ENCODE measurements at regions of chr15 and their contacts with region 1.

Region 1: GRCh38 chr15:89740137-89740536 is 10.9 kb downstream of the MESP1 start:
- DNase-seq: peak; percentile 68
- ATAC-seq: peak; percentile 99
- H3K4me3 Mint-ChIP-seq: no peak overlapping the region
- H3K27ac Mint-ChIP-seq: no peak overlapping the region
- H3K4me1 Mint-ChIP-seq: no peaks in the 10 kb centered on the region
- H3K27me3 Mint-ChIP-seq: peaks cover 5% of the 10 kb centered on the region

Region 2: DNA sequence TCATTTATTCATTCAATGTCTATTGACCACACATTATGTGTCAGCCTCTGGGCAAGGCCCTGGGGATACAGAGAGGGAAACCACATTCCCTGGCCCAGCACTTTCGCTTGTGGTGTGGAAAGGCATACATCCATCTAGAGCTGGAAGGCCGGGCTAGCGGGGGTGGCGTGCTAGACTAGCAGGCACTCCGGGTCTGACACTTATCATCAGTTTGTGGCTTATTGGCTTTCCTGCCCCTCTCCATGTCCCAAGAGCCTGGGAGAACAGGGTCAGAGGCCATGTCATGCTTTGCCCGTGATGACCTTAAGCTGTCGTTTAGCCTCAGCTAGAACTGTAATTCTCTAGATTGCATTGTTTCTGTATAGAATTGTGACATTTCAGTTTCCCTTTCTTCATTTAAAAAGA is 354.2 kb before region 1 on chr15:
- CTCF ChIA-PET with region 1: no interaction called
- POLR2A ChIA-PET with region 1: no interaction called
- intact Hi-C with region 1: no loop called
- DNase-seq: no peak
- ATAC-seq: no peak
- H3K4me3 Mint-ChIP-seq: no peak overlapping the region
- H3K27ac Mint-ChIP-seq: no peak overlapping the region
- H3K4me1 Mint-ChIP-seq: no peaks in the 10 kb centered on the region
- H3K27me3 Mint-ChIP-seq: peaks cover 25% of the 10 kb centered on the region

Region 3: DNA sequence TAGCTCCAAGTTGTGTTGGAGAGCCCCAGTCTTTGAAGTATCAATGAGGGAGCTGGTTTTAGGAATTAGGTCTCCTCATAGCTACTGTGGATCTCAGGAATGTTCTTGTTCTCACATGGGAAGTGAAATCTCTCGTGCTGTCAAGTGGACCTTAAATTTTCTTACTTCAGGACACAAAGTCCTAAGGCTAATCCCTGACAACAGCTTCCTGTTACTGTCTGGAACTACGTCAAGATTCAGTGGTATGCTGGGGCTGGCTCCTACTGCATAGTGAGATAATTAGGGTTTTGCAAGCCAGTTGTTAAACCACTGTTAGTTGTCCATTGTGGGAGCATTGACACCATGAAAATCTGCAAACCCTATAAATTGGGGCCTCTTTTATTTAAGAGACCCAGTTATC is 11.9 kb before region 1 on chr15:
- CTCF ChIA-PET with region 1: interaction called, 10 read pairs
- POLR2A ChIA-PET with region 1: no interaction called
- intact Hi-C with region 1: no loop called
- DNase-seq: no peak
- ATAC-seq: no peak
- H3K4me3 Mint-ChIP-seq: no peak overlapping the region
- H3K27ac Mint-ChIP-seq: no peak overlapping the region
- H3K4me1 Mint-ChIP-seq: no peaks in the 10 kb centered on the region
- H3K27me3 Mint-ChIP-seq: peaks cover 2% of the 10 kb centered on the region

Region 4: GRCh38 chr15:89760303-89761008 is 20.3 kb after region 1 on chr15:
- CTCF ChIA-PET with region 1: interaction called, 41 read pairs
- POLR2A ChIA-PET with region 1: no interaction called
- intact Hi-C with region 1: no loop called
- DNase-seq: peak; percentile 85
- ATAC-seq: peak; percentile 88
- H3K4me3 Mint-ChIP-seq: no peak overlapping the region
- H3K27ac Mint-ChIP-seq: no peak overlapping the region
- H3K4me1 Mint-ChIP-seq: no peaks in the 10 kb centered on the region
- H3K27me3 Mint-ChIP-seq: peaks cover 6% of the 10 kb centered on the region

Region 5: GRCh38 chr15:89888214-89888804 is 148.2 kb after region 1 on chr15:
- CTCF ChIA-PET with region 1: interaction called, 4 read pairs
- POLR2A ChIA-PET with region 1: no interaction called
- intact Hi-C with region 1: loop called in 1 of 2 experiments (anchors 1 kb)
- DNase-seq: no peak
- ATAC-seq: no peak
- H3K4me3 Mint-ChIP-seq: no peak overlapping the region
- H3K27ac Mint-ChIP-seq: peak overlapping the region; percentile 35
- H3K4me1 Mint-ChIP-seq: peaks cover 32% of the 10 kb centered on the region
- H3K27me3 Mint-ChIP-seq: no peaks in the 10 kb centered on the region

Region 6: GRCh38 chr15:90086868-90087268 is 346.7 kb after region 1 on chr15:
- CTCF ChIA-PET with region 1: no interaction called
- POLR2A ChIA-PET with region 1: no interaction called
- intact Hi-C with region 1: loop called (anchors 1 to 2 kb)
- DNase-seq: peak; percentile 75
- ATAC-seq: peak; percentile 79
- H3K4me3 Mint-ChIP-seq: no peak overlapping the region
- H3K27ac Mint-ChIP-seq: peak overlapping the region; percentile 75
- H3K4me1 Mint-ChIP-seq: peaks cover 6% of the 10 kb centered on the region
- H3K27me3 Mint-ChIP-seq: no peaks in the 10 kb centered on the region

Region 7: GRCh38 chr15:90201130-90201949 is 461.2 kb after region 1 on chr15 and contains the start of gene SEMA4B:
- CTCF ChIA-PET with region 1: no interaction called
- POLR2A ChIA-PET with region 1: no interaction called
- intact Hi-C with region 1: no loop called
- DNase-seq: peak; percentile 81
- ATAC-seq: peak; percentile 93
- H3K4me3 Mint-ChIP-seq: peak within 1 kb of the TSS; percentile 78
- H3K27ac Mint-ChIP-seq: peak within 1 kb of the TSS; percentile 77
- H3K4me1 Mint-ChIP-seq: peaks cover 9% of the 10 kb centered on the region
- H3K27me3 Mint-ChIP-seq: no peaks in the 10 kb centered on the region
- total RNA-seq, gene SEMA4B: 12.5 to 15.8 TPM

Measured in activated CD4-positive, alpha-beta T cell treated with anti-CD3 and anti-CD28 coated beads for 36 hours (primary cell).